ENCODE measurements at regions of chr2 and their contacts with region 1.

Region 1: GRCh38 chr2:60998628-60999545 is 18.6 kb upstream of the PEX13 start:
- DNase-seq: no peak
- ATAC-seq: peak in 1 of 8 donors; percentile 56
- H3K4me3 ChIP-seq: no peak overlapping the region
- H3K27ac ChIP-seq: no peak overlapping the region
- H3K4me1 ChIP-seq: peaks cover 0 to 11% (median 0%) of the 10 kb centered on the region in 9 donors
- H3K27me3 ChIP-seq: no peaks in the 10 kb centered on the region
- CTCF ChIP-seq: peak in 8 of 9 donors; percentile 40 to 79 (median 70)

Region 2: GRCh38 chr2:60707750-60708371 is 291.0 kb before region 1 on chr2:
- intact Hi-C with region 1: loop called (anchors 1 to 5 kb)
- DNase-seq: no peak
- ATAC-seq: peak in 5 of 8 donors; percentile 25 to 66 (median 40)
- H3K4me3 ChIP-seq: no peak overlapping the region
- H3K27ac ChIP-seq: no peak overlapping the region
- H3K4me1 ChIP-seq: peaks cover 0 to 16% (median 0%) of the 10 kb centered on the region in 9 donors
- H3K27me3 ChIP-seq: peaks cover 0 to 2% (median 0%) of the 10 kb centered on the region in 7 donors
- CTCF ChIP-seq: peak; percentile 65 to 82 (median 73)

Region 3: DNA sequence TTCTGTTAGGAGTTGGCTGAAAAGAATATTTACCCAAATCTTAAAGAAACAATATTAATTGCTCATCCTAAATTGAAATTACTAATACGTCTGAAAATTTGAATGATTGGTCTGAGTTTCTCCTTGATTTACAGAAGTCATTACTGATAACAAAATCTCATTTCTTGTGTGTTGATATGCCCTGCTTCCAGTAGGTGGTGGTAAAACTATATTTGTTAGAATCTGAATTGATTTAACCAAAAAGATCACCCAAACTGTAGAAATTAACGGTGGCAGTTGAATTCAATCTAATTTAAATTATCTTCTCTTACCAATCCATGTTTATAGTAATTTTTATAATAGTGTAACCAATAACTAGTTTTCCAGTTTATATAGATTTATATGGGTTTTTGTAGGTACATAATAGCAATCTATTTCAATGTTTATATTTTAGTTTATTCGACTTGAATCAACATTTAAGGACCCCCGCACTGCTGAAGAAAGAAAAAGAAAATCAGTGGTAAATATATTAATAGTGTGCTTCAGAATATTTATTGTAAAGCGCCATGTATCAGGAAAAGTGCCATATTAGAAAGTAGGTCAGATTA is 204.5 kb before region 1 on chr2:
- intact Hi-C with region 1: loop called in 7 of 10 experiments (anchors 2 to 10 kb)
- DNase-seq: no peak
- ATAC-seq: no peak
- H3K4me3 ChIP-seq: no peak overlapping the region
- H3K27ac ChIP-seq: peak overlapping the region in 1 of 10 donors; percentile 87
- H3K4me1 ChIP-seq: peaks cover 0 to 24% (median 0%) of the 10 kb centered on the region in 9 donors
- H3K27me3 ChIP-seq: no peaks in the 10 kb centered on the region
- CTCF ChIP-seq: peak in 7 of 9 donors; percentile 34 to 63 (median 53)

Region 4: GRCh38 chr2:60806988-60807681 is 191.8 kb before region 1 on chr2:
- intact Hi-C with region 1: loop called in 2 of 10 experiments (anchors 5 kb)
- DNase-seq: no peak
- ATAC-seq: peak in 1 of 8 donors; percentile 55
- H3K4me3 ChIP-seq: no peak overlapping the region
- H3K27ac ChIP-seq: peak overlapping the region in 1 of 10 donors; percentile 66
- H3K4me1 ChIP-seq: peaks cover 0 to 21% (median 0%) of the 10 kb centered on the region in 9 donors
- H3K27me3 ChIP-seq: no peaks in the 10 kb centered on the region
- CTCF ChIP-seq: no peak

Region 5: GRCh38 chr2:60861736-60862135 is 137.2 kb before region 1 on chr2:
- intact Hi-C with region 1: no loop called
- DNase-seq: no peak
- ATAC-seq: peak in 1 of 8 donors; percentile 27
- H3K4me3 ChIP-seq: no peak overlapping the region
- H3K27ac ChIP-seq: no peak overlapping the region
- H3K4me1 ChIP-seq: peaks cover 0 to 10% (median 0%) of the 10 kb centered on the region in 9 donors
- H3K27me3 ChIP-seq: no peaks in the 10 kb centered on the region
- CTCF ChIP-seq: no peak

Region 6: GRCh38 chr2:60873381-60873780 is 125.5 kb before region 1 on chr2:
- intact Hi-C with region 1: no loop called
- DNase-seq: no peak
- ATAC-seq: no peak
- H3K4me3 ChIP-seq: no peak overlapping the region
- H3K27ac ChIP-seq: no peak overlapping the region
- H3K4me1 ChIP-seq: peaks cover 0 to 2% (median 0%) of the 10 kb centered on the region in 9 donors
- H3K27me3 ChIP-seq: no peaks in the 10 kb centered on the region
- CTCF ChIP-seq: no peak

Region 7: GRCh38 chr2:61204781-61205531 is 206.1 kb after region 1 on chr2:
- intact Hi-C with region 1: no loop called
- DNase-seq: no peak
- ATAC-seq: no peak
- H3K4me3 ChIP-seq: no peak overlapping the region
- H3K27ac ChIP-seq: no peak overlapping the region
- H3K4me1 ChIP-seq: peaks cover 0 to 2% (median 0%) of the 10 kb centered on the region in 9 donors
- H3K27me3 ChIP-seq: no peaks in the 10 kb centered on the region
- CTCF ChIP-seq: no peak